Caco-2 (cell line): ENCODE measurements at regions of chr17 and their contacts with region 1.

Region 1: GRCh38 chr17:59366773-59367657 is 35.6 kb downstream of the YPEL2 start:
- DNase-seq: peak; percentile 86 to 90
- H3K4me3 ChIP-seq: no peak overlapping the region; the same call in 1 of the 2 replicates
- H3K4me3 Mint-ChIP-seq: peak overlapping the region; percentile 48
- H3K27ac Mint-ChIP-seq: peak overlapping the region; percentile 30
- H3K4me1 ChIP-seq: peaks cover 39% of the 10 kb centered on the region
- H3K4me1 Mint-ChIP-seq: peaks cover 30% of the 10 kb centered on the region
- H3K27me3 ChIP-seq: no peaks in the 10 kb centered on the region
- H3K27me3 Mint-ChIP-seq: no peaks in the 10 kb centered on the region
- CTCF ChIP-seq: no peak

Region 2: GRCh38 chr17:59329638-59330313 is 37.2 kb before region 1 on chr17:
- CTCF ChIA-PET with region 1: interaction called, 18 read pairs
- POLR2A ChIA-PET with region 1: interaction called, 14 read pairs
- intact Hi-C with region 1: loop called (anchors 1 kb)
- DNase-seq: peak; percentile 80 to 82
- H3K4me3 ChIP-seq: peak overlapping the region; percentile 90
- H3K4me3 Mint-ChIP-seq: peak overlapping the region; percentile 73
- H3K27ac Mint-ChIP-seq: peak overlapping the region; percentile 29
- H3K4me1 ChIP-seq: peaks cover 21% of the 10 kb centered on the region
- H3K4me1 Mint-ChIP-seq: peaks cover 26% of the 10 kb centered on the region
- H3K27me3 ChIP-seq: no peaks in the 10 kb centered on the region
- H3K27me3 Mint-ChIP-seq: peaks cover 4% of the 10 kb centered on the region
- CTCF ChIP-seq: peak; percentile 89 to 92

Region 3: GRCh38 chr17:59400858-59401257 is 33.8 kb after region 1 on chr17:
- CTCF ChIA-PET with region 1: interaction called, 4 read pairs
- POLR2A ChIA-PET with region 1: no interaction called
- intact Hi-C with region 1: loop called (anchors 2 kb)
- DNase-seq: no peak
- H3K4me3 ChIP-seq: no peak overlapping the region
- H3K4me3 Mint-ChIP-seq: no peak overlapping the region
- H3K27ac Mint-ChIP-seq: no peak overlapping the region
- H3K4me1 ChIP-seq: peaks cover 21% of the 10 kb centered on the region
- H3K4me1 Mint-ChIP-seq: no peaks in the 10 kb centered on the region
- H3K27me3 ChIP-seq: no peaks in the 10 kb centered on the region
- H3K27me3 Mint-ChIP-seq: no peaks in the 10 kb centered on the region
- CTCF ChIP-seq: no peak